ENCODE measurements at regions of chr12 and their contacts with region 1.

Region 1: GRCh38 chr12:64551698-64552097 is 58.6 kb upstream of the RASSF3 start:
- DNase-seq: no peak
- ATAC-seq: no peak
- H3K4me3 ChIP-seq: no peak overlapping the region
- H3K4me3 Mint-ChIP-seq: no peak overlapping the region
- H3K27ac ChIP-seq: no peak overlapping the region
- H3K27ac Mint-ChIP-seq: no peak overlapping the region
- H3K4me1 ChIP-seq: no peaks in the 10 kb centered on the region
- H3K4me1 Mint-ChIP-seq: peaks cover 13% of the 10 kb centered on the region
- H3K27me3 ChIP-seq: no peaks in the 10 kb centered on the region
- H3K27me3 Mint-ChIP-seq: no peaks in the 10 kb centered on the region
- CTCF ChIP-seq: no peak

Region 2: DNA sequence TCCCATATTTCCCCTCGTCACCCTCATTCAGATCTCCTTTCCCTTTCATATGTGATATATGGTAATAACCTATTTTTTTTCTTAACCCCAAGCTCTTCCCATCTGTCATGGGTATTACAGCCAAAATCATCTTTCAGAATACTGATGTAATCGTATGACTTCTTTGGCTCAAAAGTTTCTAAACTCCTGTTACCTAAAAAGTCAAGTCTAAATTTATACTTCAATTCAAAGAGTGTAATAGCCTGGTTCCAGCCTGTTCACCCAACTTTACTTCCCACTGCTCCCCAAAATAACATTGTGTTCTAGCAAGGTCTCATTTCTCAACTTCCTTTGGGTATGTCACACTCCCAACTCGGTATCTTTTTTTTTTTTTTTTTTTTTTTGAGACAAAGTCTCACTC is 51.3 kb before region 1 on chr12:
- CTCF ChIA-PET with region 1: no interaction called
- POLR2A ChIA-PET with region 1: no interaction called
- intact Hi-C with region 1: no loop called
- DNase-seq: no peak
- ATAC-seq: no peak
- H3K4me3 ChIP-seq: no peak overlapping the region
- H3K4me3 Mint-ChIP-seq: no peak overlapping the region
- H3K27ac ChIP-seq: no peak overlapping the region
- H3K27ac Mint-ChIP-seq: no peak overlapping the region
- H3K4me1 ChIP-seq: no peaks in the 10 kb centered on the region
- H3K4me1 Mint-ChIP-seq: peaks cover 2% of the 10 kb centered on the region
- H3K27me3 ChIP-seq: no peaks in the 10 kb centered on the region
- H3K27me3 Mint-ChIP-seq: no peaks in the 10 kb centered on the region
- CTCF ChIP-seq: no peak

Region 3: DNA sequence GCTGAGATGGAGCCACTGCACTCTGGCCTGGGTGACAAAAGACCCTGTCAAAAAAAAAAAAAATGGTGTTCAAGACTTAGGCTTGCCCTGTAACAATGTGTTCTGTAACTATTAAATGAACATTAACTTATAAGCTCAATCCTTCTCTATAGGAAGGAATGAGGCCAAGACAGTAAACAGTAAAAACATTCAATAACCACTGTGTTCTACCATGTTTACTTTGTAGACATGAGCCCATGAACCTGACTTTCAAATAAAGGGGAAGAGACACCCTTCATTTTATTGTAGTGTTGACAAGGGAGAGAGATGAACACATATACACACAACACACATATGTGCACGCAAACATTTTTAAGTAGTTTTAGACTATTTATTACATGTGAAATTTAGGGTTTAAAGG is 38.5 kb after region 1 on chr12:
- CTCF ChIA-PET with region 1: no interaction called
- POLR2A ChIA-PET with region 1: no interaction called
- intact Hi-C with region 1: loop called in 1 of 2 experiments (anchors 5 kb)
- DNase-seq: no peak
- ATAC-seq: no peak
- H3K4me3 ChIP-seq: no peak overlapping the region
- H3K4me3 Mint-ChIP-seq: no peak overlapping the region
- H3K27ac ChIP-seq: no peak overlapping the region
- H3K27ac Mint-ChIP-seq: no peak overlapping the region
- H3K4me1 ChIP-seq: peaks cover 2% of the 10 kb centered on the region
- H3K4me1 Mint-ChIP-seq: peaks cover 20% of the 10 kb centered on the region
- H3K27me3 ChIP-seq: no peaks in the 10 kb centered on the region
- H3K27me3 Mint-ChIP-seq: no peaks in the 10 kb centered on the region
- CTCF ChIP-seq: no peak

Region 4: GRCh38 chr12:64679487-64679983 is 127.8 kb after region 1 on chr12:
- CTCF ChIA-PET with region 1: interaction called, 11 read pairs
- POLR2A ChIA-PET with region 1: interaction called, 5 read pairs
- intact Hi-C with region 1: no loop called
- DNase-seq: peak; percentile 53 to 90 (median 68)
- ATAC-seq: peak; percentile 66
- H3K4me3 ChIP-seq: peak overlapping the region; percentile 19
- H3K4me3 Mint-ChIP-seq: peak overlapping the region; percentile 59
- H3K27ac ChIP-seq: peak overlapping the region; percentile 80 to 91
- H3K27ac Mint-ChIP-seq: peak overlapping the region; percentile 98
- H3K4me1 ChIP-seq: peaks cover 99% of the 10 kb centered on the region
- H3K4me1 Mint-ChIP-seq: peaks cover 90% of the 10 kb centered on the region
- H3K27me3 ChIP-seq: no peaks in the 10 kb centered on the region
- H3K27me3 Mint-ChIP-seq: no peaks in the 10 kb centered on the region
- CTCF ChIP-seq: no peak

Region 5: DNA sequence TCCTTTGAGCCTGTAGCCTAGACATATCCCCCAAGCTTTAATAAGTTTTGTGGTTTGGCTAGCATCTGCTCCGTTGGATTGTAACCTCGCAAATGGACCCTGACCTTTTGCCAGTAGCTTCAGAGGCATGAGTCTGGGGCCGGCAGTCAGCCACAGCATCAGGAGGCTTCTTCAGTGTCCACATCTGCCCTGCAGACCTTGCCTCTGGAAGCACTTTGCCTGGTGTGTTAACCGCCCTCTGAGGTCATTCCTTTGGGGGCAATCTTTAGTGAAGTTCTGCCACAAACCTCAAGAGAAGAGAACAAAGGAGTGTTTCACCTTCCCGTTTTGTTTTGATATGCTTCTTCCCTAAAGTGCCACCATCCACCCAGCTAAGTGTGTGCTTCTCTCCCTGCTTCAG is 136.1 kb after region 1 on chr12:
- CTCF ChIA-PET with region 1: interaction called, 12 read pairs
- POLR2A ChIA-PET with region 1: interaction called, 5 read pairs
- intact Hi-C with region 1: no loop called
- DNase-seq: peak in 3 of 14 experiments; percentile 34 to 40 (median 37)
- ATAC-seq: no peak
- H3K4me3 ChIP-seq: no peak overlapping the region
- H3K4me3 Mint-ChIP-seq: peak overlapping the region; percentile 36
- H3K27ac ChIP-seq: peak overlapping the region; percentile 42 to 58
- H3K27ac Mint-ChIP-seq: peak overlapping the region; percentile 98
- H3K4me1 ChIP-seq: peaks cover 97% of the 10 kb centered on the region
- H3K4me1 Mint-ChIP-seq: peaks cover 73% of the 10 kb centered on the region
- H3K27me3 ChIP-seq: no peaks in the 10 kb centered on the region
- H3K27me3 Mint-ChIP-seq: no peaks in the 10 kb centered on the region
- CTCF ChIP-seq: no peak

Region 6: GRCh38 chr12:64716371-64716770 is 164.7 kb after region 1 on chr12:
- CTCF ChIA-PET with region 1: interaction called, 11 read pairs
- POLR2A ChIA-PET with region 1: no interaction called
- intact Hi-C with region 1: loop called in 1 of 2 experiments (anchors 5 kb)
- DNase-seq: peak in 1 of 14 experiments; percentile 33
- ATAC-seq: no peak
- H3K4me3 ChIP-seq: no peak overlapping the region
- H3K4me3 Mint-ChIP-seq: no peak overlapping the region
- H3K27ac ChIP-seq: no peak overlapping the region
- H3K27ac Mint-ChIP-seq: peak overlapping the region; percentile 1
- H3K4me1 ChIP-seq: peaks cover 3% of the 10 kb centered on the region
- H3K4me1 Mint-ChIP-seq: peaks cover 41% of the 10 kb centered on the region
- H3K27me3 ChIP-seq: no peaks in the 10 kb centered on the region
- H3K27me3 Mint-ChIP-seq: no peaks in the 10 kb centered on the region
- CTCF ChIP-seq: no peak

Measured in CD4-positive, alpha-beta T cell (primary cell).